ENCODE measurements at regions of chr1 and their contacts with region 1.

Region 1: GRCh38 chr1:218330043-218330623 is 15.0 kb upstream of the TGFB2 start:
- DNase-seq: no peak
- ATAC-seq: peak in 3 of 4 donors; percentile 37 to 56 (median 55)
- H3K4me3 ChIP-seq: no peak overlapping the region
- H3K27ac ChIP-seq: no peak overlapping the region
- H3K4me1 ChIP-seq: peaks cover 0 to 4% (median 0%) of the 10 kb centered on the region in 12 donors
- H3K27me3 ChIP-seq: no peaks in the 10 kb centered on the region
- CTCF ChIP-seq: peak; percentile 59 to 79 (median 70)
- POLR2A ChIP-seq: no peak

Region 2: DNA sequence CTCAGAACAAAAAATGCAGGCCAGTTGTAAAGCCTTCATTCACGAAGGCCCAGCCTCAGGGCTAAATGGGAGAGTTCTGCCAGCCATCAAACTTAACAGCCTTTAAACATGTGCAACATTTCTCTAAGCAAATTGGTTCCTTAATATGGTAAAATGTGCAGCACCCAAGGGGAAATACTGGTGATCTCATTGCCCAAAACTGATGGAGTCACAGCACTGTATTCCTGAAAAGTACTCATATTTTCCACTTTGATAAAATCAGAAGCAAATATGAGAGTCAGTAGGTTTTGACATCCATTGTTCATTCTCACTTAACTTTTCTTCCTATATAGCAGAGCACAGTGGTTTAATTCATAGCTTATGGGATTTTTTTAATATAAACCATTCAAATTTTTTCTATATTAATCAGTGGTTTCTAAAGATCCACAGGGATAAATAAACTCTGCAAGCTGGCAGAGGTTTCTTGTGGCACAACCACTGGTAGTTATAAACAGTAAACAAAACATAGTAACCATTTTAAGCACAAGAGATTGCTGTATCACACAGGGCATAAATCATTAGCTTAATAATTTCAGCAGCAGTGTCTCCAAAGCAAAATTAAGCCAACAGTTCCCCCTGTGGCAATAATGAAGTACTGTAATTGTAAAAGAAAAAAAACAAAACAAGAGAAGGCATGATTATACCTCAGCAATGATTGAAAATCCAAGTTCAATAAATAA is 736.7 kb after region 1 on chr1:
- intact Hi-C with region 1: loop called in 7 of 10 experiments (anchors 2 to 5 kb)
- DNase-seq: no peak
- ATAC-seq: peak in 3 of 4 donors; percentile 34 to 55 (median 55)
- H3K4me3 ChIP-seq: no peak overlapping the region
- H3K27ac ChIP-seq: peak overlapping the region in 3 of 12 donors; percentile 6 to 25 (median 8)
- H3K4me1 ChIP-seq: peaks cover 0 to 14% (median 1%) of the 10 kb centered on the region in 12 donors
- H3K27me3 ChIP-seq: no peaks in the 10 kb centered on the region
- CTCF ChIP-seq: peak; percentile 31 to 70 (median 56)
- POLR2A ChIP-seq: no peak

Region 3: DNA sequence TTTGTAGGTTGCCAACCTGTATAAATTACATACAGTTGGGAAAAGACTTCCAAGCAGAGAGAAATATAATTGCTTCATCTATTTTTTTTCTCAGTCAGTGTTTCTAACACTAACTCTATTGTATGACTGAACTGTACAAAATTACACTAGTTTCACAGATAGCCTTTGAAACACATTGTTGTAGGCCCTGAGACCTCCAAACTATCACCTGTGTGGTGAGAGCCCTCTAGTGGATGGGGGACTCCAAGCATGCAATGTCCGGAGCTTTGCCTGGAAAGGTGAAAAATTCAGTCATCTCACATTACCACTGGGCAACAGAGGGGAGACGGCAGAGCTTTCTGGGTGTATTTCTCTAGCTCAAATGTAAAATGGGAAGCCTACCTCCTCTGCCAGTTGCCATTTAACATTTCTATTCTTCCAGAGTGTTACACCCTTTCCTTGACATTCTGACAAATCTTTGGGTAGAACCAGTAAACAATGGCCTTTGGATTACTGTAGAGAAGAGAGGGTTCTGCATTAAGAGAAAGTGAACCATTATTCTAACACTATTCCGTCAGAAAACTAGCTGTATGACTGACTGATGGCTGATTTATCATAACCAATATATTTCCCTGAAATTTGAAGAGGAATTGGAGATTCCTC is 1055.8 kb after region 1 on chr1:
- intact Hi-C with region 1: loop called in 1 of 10 experiments (anchors 10 kb)
- DNase-seq: peak in 4 of 5 donors; percentile 22 to 36 (median 33)
- ATAC-seq: peak; percentile 58 to 79 (median 70)
- H3K4me3 ChIP-seq: no peak overlapping the region
- H3K27ac ChIP-seq: no peak overlapping the region
- H3K4me1 ChIP-seq: peaks cover 0 to 3% (median 0%) of the 10 kb centered on the region in 12 donors
- H3K27me3 ChIP-seq: no peaks in the 10 kb centered on the region
- CTCF ChIP-seq: peak; percentile 34 to 74 (median 62)
- POLR2A ChIP-seq: no peak

Region 4: GRCh38 chr1:219566951-219567947 is 1237.1 kb after region 1 on chr1:
- intact Hi-C with region 1: loop called in 8 of 10 experiments (anchors 2 to 10 kb)
- DNase-seq: no peak
- ATAC-seq: peak; percentile 67 to 75 (median 72)
- H3K4me3 ChIP-seq: no peak overlapping the region
- H3K27ac ChIP-seq: no peak overlapping the region
- H3K4me1 ChIP-seq: peaks cover 0 to 9% (median 1%) of the 10 kb centered on the region in 12 donors
- H3K27me3 ChIP-seq: peaks cover 0 to 3% (median 0%) of the 10 kb centered on the region in 9 donors
- CTCF ChIP-seq: peak; percentile 36 to 71 (median 54)
- POLR2A ChIP-seq: no peak

Region 5: DNA sequence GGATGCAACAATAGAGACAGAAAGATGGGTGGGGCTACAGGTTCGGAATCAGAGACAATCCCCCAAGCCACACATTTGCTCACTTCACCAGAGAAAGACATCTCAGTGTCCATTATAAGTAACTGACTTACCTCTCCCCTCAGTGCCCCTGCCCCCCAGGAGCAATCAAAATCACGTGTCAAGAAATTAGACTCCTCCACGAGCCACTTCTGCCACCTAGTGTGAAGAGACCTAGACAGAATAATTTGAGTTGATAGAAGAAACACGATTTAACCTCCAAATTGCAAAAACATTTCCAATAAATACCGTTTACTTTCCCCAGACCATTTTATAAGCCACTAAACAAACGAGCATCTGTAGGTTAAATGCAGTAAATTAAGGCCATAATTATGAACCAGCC is 1475.1 kb after region 1 on chr1:
- intact Hi-C with region 1: loop called in 7 of 10 experiments (anchors 5 to 10 kb)
- DNase-seq: no peak
- ATAC-seq: no peak
- H3K4me3 ChIP-seq: no peak overlapping the region
- H3K27ac ChIP-seq: no peak overlapping the region
- H3K4me1 ChIP-seq: no peaks in the 10 kb centered on the region
- H3K27me3 ChIP-seq: peaks cover 0 to 3% (median 0%) of the 10 kb centered on the region in 9 donors
- CTCF ChIP-seq: peak in 11 of 12 donors; percentile 9 to 42 (median 24)
- POLR2A ChIP-seq: no peak

Region 6: GRCh38 chr1:219817914-219818313 is 1487.8 kb after region 1 on chr1:
- intact Hi-C with region 1: loop called in 9 of 10 experiments (anchors 2 to 10 kb)
- DNase-seq: no peak
- ATAC-seq: no peak
- H3K4me3 ChIP-seq: no peak overlapping the region
- H3K27ac ChIP-seq: no peak overlapping the region
- H3K4me1 ChIP-seq: peaks cover 0 to under 1% (median 0%) of the 10 kb centered on the region in 12 donors
- H3K27me3 ChIP-seq: peaks cover 0 to 3% (median 0%) of the 10 kb centered on the region in 9 donors
- CTCF ChIP-seq: no peak
- POLR2A ChIP-seq: no peak

Measured in heart left ventricle (tissue), 16 donors.